ENCODE measurements at regions of chr9 and their contacts with region 1.

Region 1: GRCh38 chr9:35696525-35697215 is 6.9 kb upstream of the TPM2 start:
- DNase-seq: peak; percentile 68
- H3K4me3 Mint-ChIP-seq: no peak overlapping the region
- H3K27ac Mint-ChIP-seq: no peak overlapping the region
- H3K4me1 Mint-ChIP-seq: no peaks in the 10 kb centered on the region
- H3K27me3 Mint-ChIP-seq: no peaks in the 10 kb centered on the region
- CTCF ChIP-seq: peak; percentile 72

Region 2: GRCh38 chr9:35426627-35427026 is 270.0 kb before region 1 on chr9:
- CTCF ChIA-PET with region 1: no interaction called
- POLR2A ChIA-PET with region 1: no interaction called
- intact Hi-C with region 1: no loop called
- DNase-seq: no peak
- H3K4me3 Mint-ChIP-seq: no peak overlapping the region
- H3K27ac Mint-ChIP-seq: no peak overlapping the region
- H3K4me1 Mint-ChIP-seq: no peaks in the 10 kb centered on the region
- H3K27me3 Mint-ChIP-seq: no peaks in the 10 kb centered on the region
- CTCF ChIP-seq: no peak

Region 3: DNA sequence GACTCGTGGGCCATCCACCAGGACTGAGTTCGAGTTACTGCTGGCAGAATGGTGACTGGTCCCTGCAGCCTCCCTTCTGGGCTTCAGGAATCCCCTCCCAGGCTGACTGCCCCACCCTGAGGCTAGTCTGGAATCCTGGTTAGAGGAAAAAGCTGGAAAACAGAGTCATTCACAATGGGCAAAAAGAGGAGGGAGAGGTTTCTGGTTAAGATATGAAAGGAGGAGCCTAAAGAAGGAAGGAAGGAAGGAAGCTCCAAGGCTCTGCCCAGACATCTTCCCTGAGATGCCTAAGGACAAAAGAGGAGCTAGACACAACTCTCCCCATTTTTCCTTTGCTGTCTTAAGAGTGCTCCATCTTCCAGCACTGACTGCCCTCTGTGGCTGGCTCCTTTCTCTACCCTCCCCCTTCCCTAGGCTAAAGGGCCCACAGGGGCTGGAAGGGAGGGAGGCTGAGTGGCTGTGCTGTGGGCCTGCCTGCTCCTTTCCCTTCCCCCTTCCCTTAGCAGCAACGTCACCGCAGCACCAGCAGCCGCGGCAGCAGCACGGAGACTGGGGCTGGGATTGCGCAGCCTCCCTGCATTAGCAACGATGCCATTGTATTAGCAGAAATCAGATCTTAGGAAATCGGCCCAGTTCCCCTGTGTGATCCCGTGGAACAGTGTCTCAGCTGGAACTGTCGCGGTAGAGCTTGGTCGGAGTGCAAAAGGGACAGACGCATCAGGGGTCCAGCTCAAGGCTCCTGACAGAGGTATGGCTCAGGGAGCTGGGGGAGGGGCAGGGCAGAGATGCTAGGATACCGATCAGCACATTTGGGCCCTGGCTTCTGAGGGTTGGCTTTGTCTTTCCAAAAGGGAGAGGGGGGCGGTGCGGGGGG is 158.1 kb before region 1 on chr9:
- CTCF ChIA-PET with region 1: no interaction called
- POLR2A ChIA-PET with region 1: no interaction called
- intact Hi-C with region 1: no loop called
- DNase-seq: no peak
- H3K4me3 Mint-ChIP-seq: peak overlapping the region; percentile 28
- H3K27ac Mint-ChIP-seq: no peak overlapping the region
- H3K4me1 Mint-ChIP-seq: peaks cover 13% of the 10 kb centered on the region
- H3K27me3 Mint-ChIP-seq: no peaks in the 10 kb centered on the region
- CTCF ChIP-seq: no peak

Region 4: GRCh38 chr9:35664531-35665470 is 31.9 kb before region 1 on chr9 and contains the start of gene ARHGEF39:
- CTCF ChIA-PET with region 1: interaction called, 29 read pairs
- POLR2A ChIA-PET with region 1: interaction called, 29 read pairs
- intact Hi-C with region 1: no loop called
- DNase-seq: peak; percentile 83
- H3K4me3 Mint-ChIP-seq: peak within 1 kb of the TSS; percentile 86
- H3K27ac Mint-ChIP-seq: no peak within 1 kb of the TSS
- H3K4me1 Mint-ChIP-seq: peaks cover 21% of the 10 kb centered on the region
- H3K27me3 Mint-ChIP-seq: no peaks in the 10 kb centered on the region
- CTCF ChIP-seq: no peak
- total RNA-seq, gene ARHGEF39: 2.9 and 5.1 TPM in 2 replicates

Region 5: DNA sequence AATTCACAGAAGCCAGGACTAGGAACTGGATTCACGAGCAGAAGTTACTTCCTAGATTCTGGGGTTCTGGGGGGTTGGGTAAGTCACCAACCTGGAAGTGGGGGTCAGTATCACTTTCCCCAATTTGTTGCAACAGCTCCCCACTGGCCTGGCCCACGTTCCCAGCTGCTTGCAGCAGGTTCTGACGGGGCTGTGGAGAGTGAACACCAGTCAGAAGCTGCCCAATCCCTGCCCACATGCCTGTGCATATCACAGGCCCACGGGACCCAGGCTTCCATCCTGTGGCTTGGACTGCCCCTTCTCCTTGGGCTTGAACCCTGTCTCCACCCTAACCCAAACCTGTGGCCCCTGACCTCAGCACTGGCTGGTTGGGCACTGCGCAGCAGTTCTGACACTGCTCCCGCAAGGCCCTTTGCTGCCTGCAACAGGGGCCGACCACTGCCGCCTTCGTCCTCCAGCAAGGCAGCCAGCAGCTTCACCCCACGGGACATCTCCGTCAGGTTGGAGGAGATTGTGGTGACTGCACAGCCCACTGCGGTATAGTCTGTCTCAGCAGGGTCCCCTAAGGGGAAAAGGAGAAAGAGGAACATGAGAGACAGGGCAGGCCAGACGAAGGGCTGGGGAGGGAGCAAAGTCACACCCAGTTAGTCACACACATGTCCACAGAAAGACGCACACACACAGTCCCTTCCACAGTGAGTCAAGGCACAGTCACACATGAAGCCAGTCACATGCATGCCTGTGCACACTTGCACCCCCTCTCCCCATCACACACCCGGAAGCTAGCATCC is 22.2 kb after region 1 on chr9:
- CTCF ChIA-PET with region 1: interaction called, 155 read pairs
- POLR2A ChIA-PET with region 1: interaction called, 3 read pairs
- intact Hi-C with region 1: no loop called
- DNase-seq: no peak
- H3K4me3 Mint-ChIP-seq: no peak overlapping the region
- H3K27ac Mint-ChIP-seq: peak overlapping the region; percentile 59
- H3K4me1 Mint-ChIP-seq: peaks cover 6% of the 10 kb centered on the region
- H3K27me3 Mint-ChIP-seq: no peaks in the 10 kb centered on the region
- CTCF ChIP-seq: no peak

Region 6: GRCh38 chr9:35738186-35738585 is 41.5 kb after region 1 on chr9:
- CTCF ChIA-PET with region 1: interaction called, 136 read pairs
- POLR2A ChIA-PET with region 1: interaction called, 35 read pairs
- intact Hi-C with region 1: no loop called
- DNase-seq: no peak
- H3K4me3 Mint-ChIP-seq: no peak overlapping the region
- H3K27ac Mint-ChIP-seq: peak overlapping the region; percentile 33
- H3K4me1 Mint-ChIP-seq: peaks cover 6% of the 10 kb centered on the region
- H3K27me3 Mint-ChIP-seq: no peaks in the 10 kb centered on the region
- CTCF ChIP-seq: no peak